Upper lobe of right lung (tissue), 1 donor: ENCODE measurements at regions of chr9 and their contacts with region 1.

Region 1: DNA sequence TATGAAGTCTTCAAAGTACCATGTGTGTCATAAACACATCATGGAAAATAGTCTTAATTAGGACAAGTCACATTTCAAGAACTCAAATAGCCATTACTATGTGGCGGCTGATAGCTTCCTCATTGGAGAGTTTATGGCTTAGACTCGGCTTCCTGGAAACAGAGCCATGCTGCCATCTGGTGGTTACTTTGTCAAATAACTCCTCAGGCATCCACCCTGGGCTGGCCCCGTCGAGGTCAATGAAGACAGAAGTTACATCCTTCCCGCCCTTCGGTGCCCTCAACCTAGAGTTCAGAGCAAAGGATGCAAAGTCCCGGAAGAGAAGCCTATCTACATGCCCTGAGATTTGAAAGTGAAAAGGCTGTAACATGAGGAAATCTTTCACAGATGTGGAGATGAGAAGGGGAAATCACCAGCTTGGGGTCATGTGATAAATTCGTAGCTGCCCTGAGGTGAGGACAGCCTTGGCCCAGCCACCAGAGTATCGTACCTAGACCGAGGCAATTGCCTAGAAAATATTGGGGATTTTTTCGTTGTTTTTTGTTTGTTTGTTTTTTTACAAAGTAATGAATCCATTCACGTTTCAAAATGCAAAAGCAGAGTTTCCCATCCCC is 45.5 kb upstream of the ZNF169 start:
- DNase-seq: peak; percentile 71
- ATAC-seq: peak; percentile 99
- H3K4me3 ChIP-seq: no peak overlapping the region
- H3K27ac ChIP-seq: no peak overlapping the region
- H3K4me1 ChIP-seq: no peaks in the 10 kb centered on the region
- H3K27me3 ChIP-seq: no peaks in the 10 kb centered on the region
- CTCF ChIP-seq: peak; percentile 85

Region 2: GRCh38 chr9:94065535-94065961 is 148.1 kb before region 1 on chr9:
- intact Hi-C with region 1: loop called (anchors 5 kb)
- DNase-seq: peak; percentile 71
- ATAC-seq: peak; percentile 95
- H3K4me3 ChIP-seq: no peak overlapping the region
- H3K27ac ChIP-seq: no peak overlapping the region
- H3K4me1 ChIP-seq: peaks cover 5% of the 10 kb centered on the region
- H3K27me3 ChIP-seq: no peaks in the 10 kb centered on the region
- CTCF ChIP-seq: peak; percentile 90

Region 3: GRCh38 chr9:94259077-94259892 is 45.7 kb after region 1 on chr9 and contains the start of gene ZNF169:
- intact Hi-C with region 1: no loop called
- DNase-seq: peak; percentile 96
- ATAC-seq: peak; percentile 100
- H3K4me3 ChIP-seq: peak within 1 kb of the TSS; percentile 78
- H3K27ac ChIP-seq: peak within 1 kb of the TSS; percentile 56
- H3K4me1 ChIP-seq: peaks cover 3% of the 10 kb centered on the region
- H3K27me3 ChIP-seq: no peaks in the 10 kb centered on the region
- CTCF ChIP-seq: no peak
- total RNA-seq, gene ZNF169: 6.0 TPM